Activated CD4-positive, alpha-beta T cell treated with anti-CD3 and anti-CD28 coated beads for 36 hours (primary cell): ENCODE measurements at regions of chr7 and their contacts with region 1.

Region 1: GRCh38 chr7:156515911-156516790 is 124.4 kb upstream of the RNF32 start:
- DNase-seq: no peak
- ATAC-seq: no peak
- H3K4me3 Mint-ChIP-seq: no peak overlapping the region
- H3K27ac Mint-ChIP-seq: no peak overlapping the region
- H3K4me1 Mint-ChIP-seq: no peaks in the 10 kb centered on the region
- H3K27me3 Mint-ChIP-seq: peaks cover 11% of the 10 kb centered on the region

Region 2: DNA sequence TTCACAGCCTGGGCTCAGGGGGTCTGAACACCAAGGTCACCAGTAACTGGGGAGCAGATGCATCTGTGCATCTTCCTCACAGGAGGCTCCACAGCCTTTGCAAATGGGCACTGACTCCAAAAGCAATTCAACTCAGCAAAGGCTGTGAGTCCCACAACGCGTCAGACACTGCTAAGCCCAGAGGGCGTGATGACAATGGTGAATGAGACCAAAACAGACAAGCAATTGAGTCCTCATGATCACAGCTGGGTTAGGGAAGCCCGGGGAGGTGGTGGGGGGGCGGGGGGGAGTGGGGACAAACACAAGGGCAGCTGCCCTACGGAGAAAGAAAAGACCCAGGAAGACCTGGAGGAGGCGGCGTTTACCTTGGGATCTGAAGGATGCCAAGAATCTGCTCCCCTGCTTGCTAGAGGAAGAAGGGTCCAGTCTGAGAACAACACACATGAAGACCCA is 62.9 kb after region 1 on chr7:
- CTCF ChIA-PET with region 1: no interaction called
- POLR2A ChIA-PET with region 1: no interaction called
- intact Hi-C with region 1: loop called in 1 of 2 experiments (anchors 10 kb)
- DNase-seq: no peak
- ATAC-seq: no peak
- H3K4me3 Mint-ChIP-seq: no peak overlapping the region
- H3K27ac Mint-ChIP-seq: no peak overlapping the region
- H3K4me1 Mint-ChIP-seq: no peaks in the 10 kb centered on the region
- H3K27me3 Mint-ChIP-seq: peaks cover 18% of the 10 kb centered on the region